Activated CD8-positive, alpha-beta T cell treated with anti-CD3 and anti-CD28 coated beads for 36 hours (primary cell): ENCODE measurements at regions of chr15 and their contacts with region 1.

Region 1: GRCh38 chr15:94306700-94307650 is 75.6 kb downstream of the MCTP2 start:
- DNase-seq: peak; percentile 46
- ATAC-seq: peak; percentile 68
- H3K4me3 Mint-ChIP-seq: peak overlapping the region; percentile 18
- H3K27ac Mint-ChIP-seq: peak overlapping the region; percentile 92
- H3K4me1 Mint-ChIP-seq: peaks cover 43% of the 10 kb centered on the region
- H3K27me3 Mint-ChIP-seq: no peaks in the 10 kb centered on the region
- CTCF ChIP-seq: no peak

Region 2: GRCh38 chr15:94163999-94164807 is 142.8 kb before region 1 on chr15:
- CTCF ChIA-PET with region 1: interaction called, 19 read pairs
- POLR2A ChIA-PET with region 1: no interaction called
- intact Hi-C with region 1: no loop called
- DNase-seq: peak; percentile 74
- ATAC-seq: peak; percentile 72
- H3K4me3 Mint-ChIP-seq: no peak overlapping the region
- H3K27ac Mint-ChIP-seq: no peak overlapping the region
- H3K4me1 Mint-ChIP-seq: no peaks in the 10 kb centered on the region
- H3K27me3 Mint-ChIP-seq: peaks cover 4% of the 10 kb centered on the region
- CTCF ChIP-seq: peak; percentile 98

Region 3: DNA sequence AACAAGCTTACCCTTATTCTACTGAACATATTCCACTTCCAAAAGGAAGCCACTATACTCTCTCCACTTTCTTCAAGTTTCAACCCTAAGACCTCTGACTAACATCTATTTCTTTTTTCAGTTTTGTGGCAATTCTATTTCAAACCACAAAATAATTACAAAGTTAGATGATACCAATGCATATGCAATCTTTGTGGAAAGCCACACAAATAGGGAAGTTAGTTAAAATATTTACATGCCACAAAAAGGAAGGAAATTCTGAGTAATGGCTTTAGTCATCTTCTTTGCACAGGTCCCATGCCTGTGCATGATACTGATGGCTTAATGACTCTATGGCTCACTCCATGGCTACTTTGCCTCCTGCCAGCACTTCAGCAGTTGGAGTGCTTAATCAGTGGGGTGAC is 132.6 kb before region 1 on chr15:
- CTCF ChIA-PET with region 1: no interaction called
- POLR2A ChIA-PET with region 1: no interaction called
- intact Hi-C with region 1: loop called (anchors 5 kb)
- DNase-seq: peak; percentile 54
- ATAC-seq: peak; percentile 93
- H3K4me3 Mint-ChIP-seq: no peak overlapping the region
- H3K27ac Mint-ChIP-seq: no peak overlapping the region
- H3K4me1 Mint-ChIP-seq: peaks cover 27% of the 10 kb centered on the region
- H3K27me3 Mint-ChIP-seq: peaks cover 2% of the 10 kb centered on the region
- CTCF ChIP-seq: no peak

Region 4: GRCh38 chr15:94230956-94231722 is 75.8 kb before region 1 on chr15 and contains the start of gene MCTP2:
- CTCF ChIA-PET with region 1: interaction called, 13 read pairs
- POLR2A ChIA-PET with region 1: interaction called, 19 read pairs
- intact Hi-C with region 1: loop called (anchors 1 kb)
- DNase-seq: peak; percentile 92
- ATAC-seq: peak; percentile 86
- H3K4me3 Mint-ChIP-seq: peak within 1 kb of the TSS; percentile 91
- H3K27ac Mint-ChIP-seq: peak within 1 kb of the TSS; percentile 96
- H3K4me1 Mint-ChIP-seq: peaks cover 67% of the 10 kb centered on the region
- H3K27me3 Mint-ChIP-seq: no peaks in the 10 kb centered on the region
- CTCF ChIP-seq: no peak
- total RNA-seq, gene MCTP2: 16.2 to 18.3 TPM

Region 5: DNA sequence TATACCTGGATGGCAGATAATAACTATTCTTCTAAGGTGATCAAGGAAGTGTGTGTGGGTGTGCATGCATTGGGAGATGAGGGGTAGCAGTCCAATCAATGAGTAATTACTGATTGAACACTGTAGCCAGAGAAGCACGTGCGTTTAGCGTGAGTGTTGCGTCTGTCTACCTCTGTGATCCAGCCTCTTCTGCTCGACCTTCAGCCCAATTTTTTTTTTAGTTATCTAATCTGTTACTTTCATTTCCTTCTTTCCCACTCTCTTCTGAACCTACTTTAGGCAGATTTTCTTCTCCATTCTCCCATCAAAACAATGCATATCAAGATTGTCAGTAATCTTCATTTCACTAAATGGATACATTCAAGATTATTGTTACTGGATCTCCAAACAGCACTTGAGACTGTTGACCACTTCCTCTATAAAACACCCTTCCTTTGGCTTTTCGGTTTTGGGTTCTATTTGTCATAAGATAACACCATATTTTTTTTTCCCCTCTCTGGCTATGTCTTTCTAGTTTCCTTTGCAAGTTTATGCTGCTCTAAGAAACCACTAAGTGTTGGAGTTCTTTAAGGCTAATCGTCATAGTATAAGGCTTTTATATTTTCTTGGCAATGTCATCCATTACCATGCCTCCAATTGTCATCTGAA is 34.6 kb before region 1 on chr15:
- CTCF ChIA-PET with region 1: no interaction called
- POLR2A ChIA-PET with region 1: interaction called, 3 read pairs
- intact Hi-C with region 1: loop called (anchors 2 kb)
- DNase-seq: peak; percentile 40
- ATAC-seq: peak; percentile 84
- H3K4me3 Mint-ChIP-seq: no peak overlapping the region
- H3K27ac Mint-ChIP-seq: no peak overlapping the region
- H3K4me1 Mint-ChIP-seq: peaks cover 16% of the 10 kb centered on the region
- H3K27me3 Mint-ChIP-seq: no peaks in the 10 kb centered on the region
- CTCF ChIP-seq: no peak

Region 6: DNA sequence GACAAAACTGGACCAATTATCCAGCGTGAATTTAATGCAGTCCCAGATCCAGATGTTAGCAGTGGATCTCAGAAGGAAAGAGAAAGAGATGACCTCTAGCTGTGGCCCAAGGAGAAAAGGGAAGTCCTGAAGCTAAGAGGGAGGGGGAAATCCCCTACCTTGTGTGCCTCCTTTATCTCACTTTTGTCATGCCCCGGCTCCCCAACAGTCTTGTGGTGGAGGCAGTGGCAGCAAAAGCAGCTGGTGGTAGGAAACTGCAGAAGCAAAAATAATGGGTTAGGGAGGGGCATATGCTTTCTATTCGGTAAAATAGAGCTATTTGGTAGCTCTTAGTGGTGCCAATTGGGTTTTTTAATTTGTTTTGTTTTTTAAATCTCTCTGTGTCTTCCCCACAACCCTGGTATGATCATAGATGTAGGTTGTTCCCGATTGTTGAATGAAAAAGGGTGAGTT is 19.2 kb before region 1 on chr15:
- CTCF ChIA-PET with region 1: interaction called, 15 read pairs
- POLR2A ChIA-PET with region 1: interaction called, 7 read pairs
- intact Hi-C with region 1: loop called (anchors 2 kb)
- DNase-seq: peak; percentile 78
- ATAC-seq: peak; percentile 97
- H3K4me3 Mint-ChIP-seq: peak overlapping the region; percentile 71
- H3K27ac Mint-ChIP-seq: peak overlapping the region; percentile 89
- H3K4me1 Mint-ChIP-seq: peaks cover 39% of the 10 kb centered on the region
- H3K27me3 Mint-ChIP-seq: no peaks in the 10 kb centered on the region
- CTCF ChIP-seq: no peak